Activated T-helper 1 cell treated with anti-CD3 and anti-CD28 coated beads, Interleukin-12 subunit alpha, Interleukin-12 subunit beta, Interleukin-2, Interleukin-4 antibody, amounts not matched to agents 30 ng/mL and 10 ng/mL and 1 ng/mL, durations not matched to agents 14 hours and 24 hours and 36 hours (primary cell): ENCODE measurements at regions of chr12 and their contacts with region 1.

Region 1: DNA sequence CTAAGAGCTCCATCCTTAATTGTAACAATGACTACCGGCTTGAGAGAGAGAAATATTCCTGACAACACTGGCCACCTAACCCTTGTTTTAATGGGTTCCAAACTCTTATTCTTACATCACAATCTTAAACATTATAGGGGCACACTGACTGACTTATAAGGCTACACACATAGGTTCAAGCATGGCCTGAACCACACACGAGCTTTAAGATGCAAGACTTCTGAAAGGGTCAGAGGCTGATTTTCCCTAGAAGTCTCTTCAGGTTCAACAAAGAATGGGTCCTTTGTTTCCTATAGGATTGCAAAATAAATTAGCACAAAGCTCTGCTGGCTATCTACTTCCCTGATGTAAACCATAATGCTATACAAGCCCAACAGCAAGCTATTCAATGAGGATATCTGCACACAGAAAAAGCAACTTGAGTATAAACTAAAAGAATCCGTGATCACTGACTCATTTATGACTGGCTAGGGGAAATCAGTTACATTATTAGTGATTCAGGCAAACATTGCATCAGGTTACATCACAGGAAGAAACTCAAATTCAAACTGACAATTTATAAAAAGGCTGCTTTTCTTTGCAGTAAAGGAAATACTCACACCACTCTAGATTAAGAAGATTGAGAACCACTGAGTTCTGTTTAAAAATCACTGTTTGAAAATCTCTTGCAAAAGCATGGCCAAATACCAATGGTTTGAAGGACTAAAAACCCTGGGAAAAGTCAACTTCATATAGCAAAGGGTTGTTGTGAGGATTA is 8.5 kb downstream of the BTG1 start:
- DNase-seq: no peak
- H3K4me3 Mint-ChIP-seq: peak overlapping the region; percentile 94
- H3K27ac Mint-ChIP-seq: peak overlapping the region; percentile 90
- H3K4me1 Mint-ChIP-seq: peaks cover 89% of the 10 kb centered on the region
- H3K27me3 Mint-ChIP-seq: no peaks in the 10 kb centered on the region

Region 2: GRCh38 chr12:91852634-91853033 is 284.5 kb before region 1 on chr12:
- intact Hi-C with region 1: loop called (anchors 2 kb)
- DNase-seq: no peak
- H3K4me3 Mint-ChIP-seq: no peak overlapping the region
- H3K27ac Mint-ChIP-seq: no peak overlapping the region
- H3K4me1 Mint-ChIP-seq: peaks cover 22% of the 10 kb centered on the region
- H3K27me3 Mint-ChIP-seq: peaks cover 6% of the 10 kb centered on the region

Region 3: GRCh38 chr12:91991399-91992187 is 145.6 kb before region 1 on chr12:
- intact Hi-C with region 1: loop called (anchors 1 kb)
- DNase-seq: no peak
- H3K4me3 Mint-ChIP-seq: no peak overlapping the region
- H3K27ac Mint-ChIP-seq: no peak overlapping the region
- H3K4me1 Mint-ChIP-seq: peaks cover 4% of the 10 kb centered on the region
- H3K27me3 Mint-ChIP-seq: no peaks in the 10 kb centered on the region

Region 4: DNA sequence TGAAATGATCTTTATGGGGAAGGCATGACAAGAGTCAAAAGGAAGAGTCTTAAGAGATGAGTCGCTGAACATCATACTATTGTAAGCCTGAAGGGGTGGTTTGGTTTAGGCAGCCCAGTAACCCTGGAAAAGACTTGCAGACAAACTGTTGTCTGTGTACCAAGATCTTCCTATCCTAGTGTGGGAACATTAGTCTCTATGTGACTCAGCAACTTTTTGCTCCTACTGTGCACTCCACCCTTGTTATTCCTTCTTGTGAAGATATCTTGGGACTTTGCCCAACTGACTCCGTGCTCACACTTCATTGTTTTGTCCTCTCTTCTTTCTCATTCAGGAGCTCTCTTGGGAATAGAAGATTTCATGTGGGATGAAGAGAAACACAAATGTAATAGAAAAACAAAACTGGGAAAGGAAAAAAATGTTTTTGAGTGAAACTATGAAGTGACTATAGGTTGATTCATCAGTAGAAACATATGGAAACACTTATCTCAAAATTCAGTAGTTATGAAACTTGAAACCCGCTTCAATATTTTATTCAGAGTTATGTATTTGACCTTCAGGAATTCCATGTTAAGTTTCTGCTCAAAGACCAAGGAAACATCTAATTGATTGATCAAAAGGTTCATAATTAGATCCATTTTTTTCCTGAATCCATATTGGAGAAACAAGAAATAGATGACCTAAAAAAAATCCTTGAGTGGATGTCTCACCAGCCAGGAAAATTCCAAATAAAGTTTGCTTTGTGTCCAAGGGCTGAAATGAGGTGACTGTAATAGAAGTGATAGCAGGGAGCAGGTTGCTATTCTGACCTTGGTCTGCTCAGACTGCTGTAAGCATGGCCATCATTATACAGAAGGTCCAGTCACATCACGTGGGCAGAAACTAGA is 58.7 kb before region 1 on chr12:
- intact Hi-C with region 1: loop called (anchors 1 kb)
- DNase-seq: no peak
- H3K4me3 Mint-ChIP-seq: no peak overlapping the region
- H3K27ac Mint-ChIP-seq: peak overlapping the region; percentile 45
- H3K4me1 Mint-ChIP-seq: peaks cover 55% of the 10 kb centered on the region
- H3K27me3 Mint-ChIP-seq: no peaks in the 10 kb centered on the region

Region 5: DNA sequence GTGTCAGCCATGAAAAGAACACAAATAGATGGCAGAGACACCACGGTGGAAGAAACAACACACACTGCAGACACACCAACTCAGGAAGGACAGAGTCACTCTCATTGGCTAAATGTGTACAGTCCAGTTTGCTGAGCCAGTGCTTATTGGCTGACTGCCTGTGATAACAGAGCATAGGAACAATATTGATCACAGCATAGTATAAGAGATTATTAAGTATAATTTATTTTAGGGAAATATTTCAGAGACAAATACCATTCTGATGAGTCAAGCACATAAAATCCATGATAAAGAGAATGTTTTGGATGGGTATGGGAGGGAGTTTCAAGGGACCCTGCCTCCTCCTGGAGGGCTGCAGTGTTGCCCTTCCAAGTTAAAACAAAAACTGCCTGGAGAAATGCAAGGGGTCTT is 42.4 kb before region 1 on chr12:
- intact Hi-C with region 1: loop called (anchors 5 kb)
- DNase-seq: no peak
- H3K4me3 Mint-ChIP-seq: no peak overlapping the region
- H3K27ac Mint-ChIP-seq: no peak overlapping the region
- H3K4me1 Mint-ChIP-seq: peaks cover 15% of the 10 kb centered on the region
- H3K27me3 Mint-ChIP-seq: peaks cover 2% of the 10 kb centered on the region

Region 6: GRCh38 chr12:92118826-92119536 is 18.2 kb before region 1 on chr12:
- intact Hi-C with region 1: loop called (anchors 2 kb)
- DNase-seq: no peak
- H3K4me3 Mint-ChIP-seq: no peak overlapping the region
- H3K27ac Mint-ChIP-seq: peak overlapping the region; percentile 54
- H3K4me1 Mint-ChIP-seq: peaks cover 49% of the 10 kb centered on the region
- H3K27me3 Mint-ChIP-seq: no peaks in the 10 kb centered on the region